CD14-positive monocyte (primary cell): ENCODE measurements at regions of chr1 and their contacts with region 1.

Region 1: GRCh38 chr1:36187800-36188593 is 32.0 kb downstream of the MAP7D1 start:
- DNase-seq: peak; percentile 83 to 89 (median 89)
- H3K4me3 ChIP-seq: no peak overlapping the region
- H3K4me3 Mint-ChIP-seq: peak overlapping the region in 1 of 2 donors; percentile 79
- H3K27ac ChIP-seq: peak overlapping the region; percentile 12 to 28
- H3K27ac Mint-ChIP-seq: peak overlapping the region; percentile 37 to 89 (median 78)
- H3K4me1 ChIP-seq: peaks cover 5 to 7% of the 10 kb centered on the region in 2 donors
- H3K4me1 Mint-ChIP-seq: peaks cover 5% of the 10 kb centered on the region
- H3K27me3 ChIP-seq: no peaks in the 10 kb centered on the region
- H3K27me3 Mint-ChIP-seq: peaks cover 0 to 6% (median 1%) of the 10 kb centered on the region in 3 donors
- CTCF ChIP-seq: peak; percentile 78

Region 2: GRCh38 chr1:35788139-35788538 is 399.9 kb before region 1 on chr1:
- intact Hi-C with region 1: no loop called
- DNase-seq: no peak
- H3K4me3 ChIP-seq: no peak overlapping the region
- H3K4me3 Mint-ChIP-seq: no peak overlapping the region
- H3K27ac ChIP-seq: no peak overlapping the region
- H3K27ac Mint-ChIP-seq: no peak overlapping the region
- H3K4me1 ChIP-seq: peaks cover 6 to 9% of the 10 kb centered on the region in 2 donors
- H3K4me1 Mint-ChIP-seq: peaks cover 8% of the 10 kb centered on the region
- H3K27me3 ChIP-seq: no peaks in the 10 kb centered on the region
- H3K27me3 Mint-ChIP-seq: peaks cover 0 to 2% (median 0%) of the 10 kb centered on the region in 3 donors
- CTCF ChIP-seq: no peak

Region 3: DNA sequence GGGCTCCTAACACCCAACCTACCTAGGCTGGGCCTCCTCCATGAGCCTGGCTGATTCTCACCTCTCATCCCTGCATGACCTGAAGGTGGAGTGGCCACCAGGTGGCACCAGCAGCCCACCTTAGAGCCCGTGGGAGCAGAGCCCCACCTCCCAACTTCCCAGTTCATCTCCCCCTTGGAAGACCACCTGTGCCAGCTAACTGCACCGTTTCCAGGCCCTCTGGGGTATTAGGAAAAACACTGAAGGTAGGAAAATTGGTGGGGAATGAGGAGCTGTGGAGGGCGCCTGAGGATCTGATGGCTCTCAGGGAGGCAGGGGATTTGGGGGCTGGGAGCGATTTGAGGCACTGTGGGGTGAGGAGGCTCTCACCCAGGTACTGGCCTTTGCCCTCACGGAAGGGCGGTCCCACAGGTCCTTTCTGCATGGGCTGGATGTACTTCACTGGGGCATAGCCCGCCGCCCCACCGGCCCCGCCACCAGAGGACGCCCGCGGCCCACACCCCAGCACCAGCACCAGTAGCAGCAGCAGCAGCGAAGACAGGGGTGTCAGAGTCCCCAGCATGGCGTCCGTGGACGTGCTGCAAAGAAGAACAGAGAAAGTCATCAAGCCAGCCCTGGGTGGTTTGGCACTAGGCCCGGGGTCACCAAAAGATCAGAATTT is 88.2 kb before region 1 on chr1:
- intact Hi-C with region 1: loop called (anchors 2 to 5 kb)
- DNase-seq: peak; percentile 55 to 68 (median 66)
- H3K4me3 ChIP-seq: peak overlapping the region in 1 of 3 experiments; percentile 24
- H3K4me3 Mint-ChIP-seq: peak overlapping the region; percentile 38 to 74
- H3K27ac ChIP-seq: peak overlapping the region in 1 of 2 donors; percentile 26
- H3K27ac Mint-ChIP-seq: peak overlapping the region in 2 of 7 donors; percentile 5 to 68
- H3K4me1 ChIP-seq: peaks cover 22 to 26% of the 10 kb centered on the region in 2 donors
- H3K4me1 Mint-ChIP-seq: peaks cover 30% of the 10 kb centered on the region
- H3K27me3 ChIP-seq: no peaks in the 10 kb centered on the region
- H3K27me3 Mint-ChIP-seq: peaks cover 0 to 8% (median 1%) of the 10 kb centered on the region in 3 donors
- CTCF ChIP-seq: peak; percentile 90

Region 4: GRCh38 chr1:36149237-36149972 is 38.6 kb before region 1 on chr1 and contains the start of gene TRAPPC3:
- intact Hi-C with region 1: loop called (anchors 1 to 2 kb)
- DNase-seq: peak; percentile 100
- H3K4me3 ChIP-seq: peak within 1 kb of the TSS; percentile 87 to 91 (median 87)
- H3K4me3 Mint-ChIP-seq: peak within 1 kb of the TSS; percentile 93 to 98
- H3K27ac ChIP-seq: peak within 1 kb of the TSS; percentile 100
- H3K27ac Mint-ChIP-seq: peak within 1 kb of the TSS; percentile 98 to 100 (median 99)
- H3K4me1 ChIP-seq: peaks cover 47 to 58% of the 10 kb centered on the region in 2 donors
- H3K4me1 Mint-ChIP-seq: peaks cover 59% of the 10 kb centered on the region
- H3K27me3 ChIP-seq: no peaks in the 10 kb centered on the region
- H3K27me3 Mint-ChIP-seq: peaks cover 0 to 2% (median 0%) of the 10 kb centered on the region in 3 donors
- CTCF ChIP-seq: peak; percentile 82
- polyA plus RNA-seq, gene TRAPPC3: 61.1 to 136 (median 125) TPM

Region 5: DNA sequence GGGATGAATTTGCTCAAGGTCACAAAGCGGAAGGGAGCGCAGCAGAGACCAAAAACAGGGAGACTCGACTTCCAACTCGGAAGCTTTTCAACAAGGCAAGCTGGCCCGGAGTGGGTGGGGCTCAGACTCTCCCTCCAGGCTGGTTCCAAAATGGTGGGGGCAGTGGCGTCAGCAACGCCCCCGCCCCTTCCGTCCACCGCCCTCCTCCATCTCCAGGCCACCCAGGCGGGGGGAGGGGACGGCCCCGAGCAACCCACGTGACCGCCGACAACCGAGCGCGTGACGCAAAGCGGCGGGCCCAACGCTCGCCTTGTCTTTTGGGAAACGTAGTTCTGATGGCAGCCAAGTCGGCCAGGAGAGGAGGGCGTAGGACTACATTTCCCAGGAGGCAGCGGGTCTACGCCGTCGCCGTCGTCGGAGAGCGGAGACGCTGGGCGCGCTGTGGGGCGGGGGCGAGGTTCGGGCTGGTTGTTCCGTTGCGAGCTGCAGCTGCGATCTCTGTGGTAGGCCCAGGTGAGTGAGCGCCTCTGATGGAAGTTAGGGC is 36.1 kb after region 1 on chr1 and contains the start of gene THRAP3:
- intact Hi-C with region 1: loop called in 1 of 2 experiments (anchors 5 kb)
- DNase-seq: peak; percentile 99 to 100 (median 100)
- H3K4me3 ChIP-seq: peak within 1 kb of the TSS; percentile 86 to 88 (median 87)
- H3K4me3 Mint-ChIP-seq: peak within 1 kb of the TSS; percentile 97 to 100
- H3K27ac ChIP-seq: peak within 1 kb of the TSS; percentile 97 to 98
- H3K27ac Mint-ChIP-seq: peak within 1 kb of the TSS; percentile 99 to 100 (median 100)
- H3K4me1 ChIP-seq: peaks cover 24 to 35% of the 10 kb centered on the region in 2 donors
- H3K4me1 Mint-ChIP-seq: peaks cover 26% of the 10 kb centered on the region
- H3K27me3 ChIP-seq: no peaks in the 10 kb centered on the region
- H3K27me3 Mint-ChIP-seq: peaks cover 0 to 3% (median 2%) of the 10 kb centered on the region in 3 donors
- CTCF ChIP-seq: no peak
- polyA plus RNA-seq, gene THRAP3: 30.1 to 63.4 (median 35.7) TPM

Region 6: GRCh38 chr1:36239941-36240637 is 52.1 kb after region 1 on chr1:
- intact Hi-C with region 1: no loop called
- DNase-seq: no peak
- H3K4me3 ChIP-seq: no peak overlapping the region
- H3K4me3 Mint-ChIP-seq: no peak overlapping the region
- H3K27ac ChIP-seq: peak overlapping the region in 1 of 2 donors; percentile 46
- H3K27ac Mint-ChIP-seq: peak overlapping the region in 6 of 7 donors; percentile 5 to 73 (median 40)
- H3K4me1 ChIP-seq: peaks cover 0 to 4% of the 10 kb centered on the region in 2 donors
- H3K4me1 Mint-ChIP-seq: peaks cover 14% of the 10 kb centered on the region
- H3K27me3 ChIP-seq: no peaks in the 10 kb centered on the region
- H3K27me3 Mint-ChIP-seq: peaks cover 0 to 1% (median 0%) of the 10 kb centered on the region in 3 donors
- CTCF ChIP-seq: no peak

Region 7: DNA sequence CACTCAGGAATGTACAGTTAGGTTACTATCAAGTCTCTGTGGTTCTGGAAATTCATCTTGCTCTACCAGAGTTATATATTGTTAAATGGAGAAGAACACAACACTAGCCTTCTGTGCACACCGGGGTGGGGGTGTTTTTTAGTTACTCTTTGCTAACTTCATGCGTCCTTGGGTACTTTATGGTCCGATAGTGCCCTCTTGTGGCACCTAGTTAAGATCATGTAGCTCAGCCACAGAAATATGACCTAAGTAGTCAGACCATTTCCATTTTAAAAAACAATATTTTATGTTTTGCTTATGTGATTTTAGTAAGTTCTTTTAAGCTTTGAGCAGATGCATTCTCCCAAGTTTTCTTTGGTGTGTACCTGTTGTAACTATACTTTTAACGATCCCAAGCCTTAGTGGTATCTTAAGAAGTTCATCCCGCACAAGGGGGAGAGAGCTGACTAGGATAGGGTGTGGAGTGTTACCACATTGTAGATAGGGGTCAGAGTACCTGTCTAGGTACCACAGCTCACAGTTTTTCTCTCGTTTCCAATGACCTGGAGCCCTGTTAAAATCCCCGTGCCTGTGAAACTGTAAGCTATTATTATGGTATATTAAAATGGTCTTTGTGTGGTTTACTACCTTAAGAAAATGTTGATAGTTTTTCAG is 97.6 kb after region 1 on chr1:
- intact Hi-C with region 1: loop called (anchors 1 to 10 kb)
- DNase-seq: peak; percentile 72 to 81 (median 75)
- H3K4me3 ChIP-seq: no peak overlapping the region
- H3K4me3 Mint-ChIP-seq: no peak overlapping the region
- H3K27ac ChIP-seq: peak overlapping the region in 1 of 2 donors; percentile 36
- H3K27ac Mint-ChIP-seq: peak overlapping the region in 4 of 7 donors; percentile 5 to 87 (median 52)
- H3K4me1 ChIP-seq: no peaks in the 10 kb centered on the region
- H3K4me1 Mint-ChIP-seq: peaks cover 2% of the 10 kb centered on the region
- H3K27me3 ChIP-seq: no peaks in the 10 kb centered on the region
- H3K27me3 Mint-ChIP-seq: no peaks in the 10 kb centered on the region
- CTCF ChIP-seq: peak; percentile 84

Region 8: GRCh38 chr1:36420836-36421664 is 233.1 kb after region 1 on chr1:
- intact Hi-C with region 1: no loop called
- DNase-seq: peak; percentile 80 to 90 (median 84)
- H3K4me3 ChIP-seq: no peak overlapping the region
- H3K4me3 Mint-ChIP-seq: peak overlapping the region in 1 of 2 donors; percentile 19
- H3K27ac ChIP-seq: no peak overlapping the region
- H3K27ac Mint-ChIP-seq: peak overlapping the region in 6 of 7 donors; percentile 32 to 86 (median 72)
- H3K4me1 ChIP-seq: peaks cover 4 to 5% of the 10 kb centered on the region in 2 donors
- H3K4me1 Mint-ChIP-seq: peaks cover 8% of the 10 kb centered on the region
- H3K27me3 ChIP-seq: no peaks in the 10 kb centered on the region
- H3K27me3 Mint-ChIP-seq: peaks cover 0 to 1% (median 0%) of the 10 kb centered on the region in 3 donors
- CTCF ChIP-seq: peak; percentile 88